ENCODE measurements at regions of chr19 and their contacts with region 1.

Region 1: DNA sequence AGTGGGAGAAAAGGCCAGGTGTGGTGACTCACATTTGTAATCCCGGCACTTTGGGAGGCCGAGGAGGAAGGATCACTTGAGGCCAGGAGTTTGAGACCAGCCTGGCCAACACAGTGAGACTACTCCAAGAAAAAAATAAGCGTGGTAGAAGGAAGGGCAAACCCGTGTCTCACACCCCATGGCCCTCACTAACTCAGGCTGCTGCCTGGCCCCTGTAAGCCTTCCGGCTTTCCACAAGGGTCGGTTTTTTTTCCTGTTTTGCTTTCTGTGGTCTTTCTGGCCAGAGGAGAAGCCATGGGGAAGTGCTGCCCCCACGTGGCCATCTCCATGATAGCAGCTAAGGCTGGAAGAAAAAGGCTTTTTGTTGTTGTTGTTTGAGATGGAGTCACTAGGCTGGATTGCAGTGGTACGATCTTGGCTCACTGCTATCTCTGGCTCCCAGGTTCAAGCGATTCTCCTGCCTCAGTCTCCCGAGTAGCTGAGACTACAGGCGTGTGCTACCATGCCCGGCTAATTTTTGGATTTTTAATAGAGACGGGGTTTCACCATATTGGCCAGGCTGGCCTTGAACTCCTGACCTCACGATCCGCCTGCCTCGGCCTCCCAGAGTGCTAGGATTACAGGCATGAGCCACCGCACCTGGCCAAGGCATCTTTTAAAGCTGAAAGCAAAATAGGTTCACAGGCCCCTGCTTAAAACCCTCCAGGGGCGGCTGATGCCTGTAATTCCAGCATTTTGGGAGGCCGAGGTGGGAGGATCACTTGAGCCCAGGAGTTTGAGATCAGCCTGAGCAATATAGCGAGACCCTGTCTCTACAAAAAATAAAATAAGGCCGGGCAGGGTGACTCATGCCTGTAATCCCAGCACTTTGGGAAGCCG is 7.5 kb upstream of the ARHGEF18 start:
- DNase-seq: peak; percentile 71 to 77 (median 73)
- H3K4me3 ChIP-seq: no peak overlapping the region
- H3K4me3 Mint-ChIP-seq: peak overlapping the region; percentile 41 to 51
- H3K27ac ChIP-seq: no peak overlapping the region
- H3K27ac Mint-ChIP-seq: peak overlapping the region in 4 of 7 donors; percentile 10 to 71 (median 38)
- H3K4me1 ChIP-seq: peaks cover 73 to 90% of the 10 kb centered on the region in 2 donors
- H3K4me1 Mint-ChIP-seq: peaks cover 82% of the 10 kb centered on the region
- H3K27me3 ChIP-seq: no peaks in the 10 kb centered on the region
- H3K27me3 Mint-ChIP-seq: peaks cover 2 to 25% (median 2%) of the 10 kb centered on the region in 3 donors
- CTCF ChIP-seq: peak; percentile 84

Region 2: GRCh38 chr19:7104747-7105447 is 236.3 kb before region 1 on chr19:
- intact Hi-C with region 1: loop called in 1 of 2 experiments (anchors 5 kb)
- DNase-seq: peak; percentile 30 to 44 (median 41)
- H3K4me3 ChIP-seq: no peak overlapping the region
- H3K4me3 Mint-ChIP-seq: no peak overlapping the region
- H3K27ac ChIP-seq: no peak overlapping the region
- H3K27ac Mint-ChIP-seq: no peak overlapping the region
- H3K4me1 ChIP-seq: peaks cover 23 to 31% of the 10 kb centered on the region in 2 donors
- H3K4me1 Mint-ChIP-seq: peaks cover 2% of the 10 kb centered on the region
- H3K27me3 ChIP-seq: no peaks in the 10 kb centered on the region
- H3K27me3 Mint-ChIP-seq: peaks cover 4 to 10% (median 10%) of the 10 kb centered on the region in 3 donors
- CTCF ChIP-seq: no peak

Region 3: GRCh38 chr19:7197760-7198696 is 143.2 kb before region 1 on chr19:
- intact Hi-C with region 1: loop called in 1 of 2 experiments (anchors 5 kb)
- DNase-seq: peak; percentile 91 to 94 (median 92)
- H3K4me3 ChIP-seq: peak overlapping the region; percentile 69 to 88 (median 70)
- H3K4me3 Mint-ChIP-seq: peak overlapping the region; percentile 87 to 98
- H3K27ac ChIP-seq: peak overlapping the region; percentile 84 to 87
- H3K27ac Mint-ChIP-seq: peak overlapping the region; percentile 88 to 99 (median 96)
- H3K4me1 ChIP-seq: peaks cover 13 to 21% of the 10 kb centered on the region in 2 donors
- H3K4me1 Mint-ChIP-seq: peaks cover 22% of the 10 kb centered on the region
- H3K27me3 ChIP-seq: peaks cover 0 to 2% of the 10 kb centered on the region in 2 donors
- H3K27me3 Mint-ChIP-seq: peaks cover 0 to 11% (median 6%) of the 10 kb centered on the region in 3 donors
- CTCF ChIP-seq: peak; percentile 45

Region 4: DNA sequence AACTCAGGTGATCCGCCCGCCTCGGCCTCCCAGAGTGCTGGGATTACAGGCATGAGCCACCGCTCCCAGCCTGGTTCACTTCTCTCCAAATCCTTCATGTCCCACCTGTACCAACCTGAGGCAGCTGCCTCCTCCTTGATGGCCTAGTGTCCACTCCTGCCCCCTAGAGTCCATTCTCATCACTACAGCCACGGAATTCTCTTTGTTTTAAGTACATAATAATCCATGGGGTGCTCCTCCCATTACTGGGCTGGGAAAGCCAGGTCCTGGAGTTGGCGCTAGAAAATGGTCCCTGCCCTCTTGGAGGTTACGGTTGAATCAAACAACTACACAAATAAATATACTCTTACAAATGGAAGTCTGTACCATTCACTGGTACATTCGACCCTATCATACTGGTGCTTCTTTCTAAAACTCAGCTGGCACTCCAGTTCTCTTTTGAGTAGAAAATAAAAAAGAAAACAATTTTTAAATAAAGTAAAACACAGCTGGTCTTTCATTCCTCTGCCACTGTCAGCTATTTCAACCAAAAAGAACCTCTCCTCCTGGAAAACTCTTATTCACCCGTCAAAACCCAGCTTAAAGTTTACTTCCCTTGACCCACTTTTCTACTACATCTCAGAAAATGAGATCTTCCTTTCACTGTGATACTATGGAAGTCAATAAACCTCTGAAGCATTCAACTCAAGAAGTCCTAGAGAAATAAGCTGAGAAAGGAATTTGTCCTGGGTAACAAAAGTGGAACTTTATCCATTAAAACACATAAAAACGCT is 14.9 kb before region 1 on chr19:
- intact Hi-C with region 1: no loop called
- DNase-seq: peak in 1 of 3 donors; percentile 26
- H3K4me3 ChIP-seq: no peak overlapping the region
- H3K4me3 Mint-ChIP-seq: no peak overlapping the region
- H3K27ac ChIP-seq: no peak overlapping the region
- H3K27ac Mint-ChIP-seq: no peak overlapping the region
- H3K4me1 ChIP-seq: no peaks in the 10 kb centered on the region
- H3K4me1 Mint-ChIP-seq: peaks cover 4% of the 10 kb centered on the region
- H3K27me3 ChIP-seq: no peaks in the 10 kb centered on the region
- H3K27me3 Mint-ChIP-seq: peaks cover 0 to 1% (median 0%) of the 10 kb centered on the region in 3 donors
- CTCF ChIP-seq: peak; percentile 59

Measured in CD14-positive monocyte (primary cell).